ENCODE measurements at regions of chr12 and their contacts with region 1.

Region 1: DNA sequence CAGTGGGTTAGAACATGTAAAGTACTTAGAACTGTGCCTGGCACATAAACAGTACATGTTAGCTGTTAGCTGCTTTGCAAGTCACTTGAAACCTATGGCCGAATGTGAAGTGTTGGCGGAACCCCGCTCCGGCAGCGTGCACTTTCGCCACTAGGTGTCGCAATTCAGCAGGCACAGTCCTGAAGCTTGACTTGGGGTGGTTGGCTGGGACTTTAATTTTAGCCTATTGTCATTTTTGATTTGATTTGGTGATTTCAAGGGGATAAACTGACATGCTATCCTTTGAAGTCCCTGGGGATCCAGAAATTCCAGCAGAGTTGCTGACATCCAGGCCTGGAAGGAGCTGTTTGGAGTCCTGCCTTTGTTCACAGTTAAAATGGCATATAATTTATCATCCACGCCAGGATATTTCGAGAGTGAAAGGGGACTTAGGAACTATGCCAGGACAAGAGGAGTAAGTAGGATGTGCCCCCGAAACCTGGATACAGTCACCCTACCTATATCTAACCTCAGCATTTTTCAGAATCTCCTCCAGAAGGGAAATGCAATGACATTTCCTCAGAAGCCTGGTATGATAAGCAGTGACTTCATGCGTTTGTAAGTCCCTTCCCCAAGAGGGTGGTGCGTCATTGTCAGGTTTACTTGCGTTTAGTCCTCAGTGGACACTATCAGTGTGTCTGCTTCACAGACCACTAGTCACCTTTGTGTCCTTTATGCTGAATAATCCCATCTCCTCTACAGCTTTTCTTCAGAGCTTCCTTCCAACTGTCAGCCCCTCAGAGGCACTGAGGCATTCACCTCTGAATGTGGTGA is 3.5 kb upstream of the TSPAN9 start:
- DNase-seq: peak; percentile 89 to 92
- ATAC-seq: peak; percentile 49 to 72; a peak in 5 of 6 replicates
- H3K4me3 ChIP-seq: no peak overlapping the region
- H3K27ac ChIP-seq: no peak overlapping the region
- H3K4me1 ChIP-seq: peaks cover 11% of the 10 kb centered on the region; the same call in 2 of the 3 replicates
- CTCF ChIP-seq: peak; percentile 95
- EP300 ChIP-seq: no peak
- POLR2A ChIP-seq: no peak
- RAD21 ChIP-seq: peak; percentile 73 to 82

Region 2: GRCh38 chr12:2982127-2982760 is 91.4 kb before region 1 on chr12:
- CTCF ChIA-PET with region 1: no interaction called
- POLR2A ChIA-PET with region 1: no interaction called
- DNase-seq: no peak
- ATAC-seq: no peak
- H3K4me3 ChIP-seq: no peak overlapping the region
- H3K27ac ChIP-seq: no peak overlapping the region
- H3K4me1 ChIP-seq: no peaks in the 10 kb centered on the region
- CTCF ChIP-seq: no peak
- EP300 ChIP-seq: no peak
- POLR2A ChIP-seq: no peak
- RAD21 ChIP-seq: no peak

Region 3: DNA sequence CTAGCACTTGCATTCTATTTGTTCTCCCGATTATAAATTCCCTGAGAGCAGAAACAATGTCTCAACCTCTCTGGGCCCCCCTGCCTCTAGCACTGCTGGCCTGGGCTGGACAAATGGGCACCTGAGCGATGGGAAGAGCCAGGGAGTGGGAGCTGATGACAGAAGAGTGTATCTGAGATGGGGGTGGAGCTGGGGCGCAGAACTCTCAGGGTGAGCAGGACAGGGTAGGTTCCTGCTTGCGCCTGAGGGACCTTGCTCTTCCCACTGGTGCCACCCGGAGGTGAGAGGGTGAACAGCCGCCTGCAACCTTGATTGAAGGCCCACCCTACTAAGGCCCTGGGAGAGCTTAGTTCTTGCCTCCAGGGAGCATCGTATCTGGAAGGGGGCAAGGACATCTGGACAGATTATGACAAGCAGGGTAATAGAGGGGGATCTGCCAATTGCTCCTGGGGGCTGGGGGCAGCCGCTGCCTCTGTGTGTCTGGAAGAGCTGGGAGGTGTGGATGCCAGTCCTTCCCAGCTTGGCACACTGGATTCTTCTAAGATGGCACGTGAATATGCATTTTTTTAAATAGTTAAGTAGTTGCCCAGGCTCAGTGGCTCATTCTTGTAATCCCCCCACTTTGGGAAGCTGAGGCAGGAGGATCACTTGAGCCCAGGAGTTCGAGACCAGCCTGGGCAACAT is 39.4 kb before region 1 on chr12:
- CTCF ChIA-PET with region 1: interaction called, 10 read pairs
- POLR2A ChIA-PET with region 1: no interaction called
- DNase-seq: peak; percentile 79 to 82
- ATAC-seq: peak; percentile 92 to 95
- H3K4me3 ChIP-seq: no peak overlapping the region
- H3K27ac ChIP-seq: no peak overlapping the region
- H3K4me1 ChIP-seq: no peaks in the 10 kb centered on the region
- CTCF ChIP-seq: peak; percentile 50
- EP300 ChIP-seq: no peak
- POLR2A ChIP-seq: no peak
- RAD21 ChIP-seq: peak; percentile 54 to 69

Region 4: DNA sequence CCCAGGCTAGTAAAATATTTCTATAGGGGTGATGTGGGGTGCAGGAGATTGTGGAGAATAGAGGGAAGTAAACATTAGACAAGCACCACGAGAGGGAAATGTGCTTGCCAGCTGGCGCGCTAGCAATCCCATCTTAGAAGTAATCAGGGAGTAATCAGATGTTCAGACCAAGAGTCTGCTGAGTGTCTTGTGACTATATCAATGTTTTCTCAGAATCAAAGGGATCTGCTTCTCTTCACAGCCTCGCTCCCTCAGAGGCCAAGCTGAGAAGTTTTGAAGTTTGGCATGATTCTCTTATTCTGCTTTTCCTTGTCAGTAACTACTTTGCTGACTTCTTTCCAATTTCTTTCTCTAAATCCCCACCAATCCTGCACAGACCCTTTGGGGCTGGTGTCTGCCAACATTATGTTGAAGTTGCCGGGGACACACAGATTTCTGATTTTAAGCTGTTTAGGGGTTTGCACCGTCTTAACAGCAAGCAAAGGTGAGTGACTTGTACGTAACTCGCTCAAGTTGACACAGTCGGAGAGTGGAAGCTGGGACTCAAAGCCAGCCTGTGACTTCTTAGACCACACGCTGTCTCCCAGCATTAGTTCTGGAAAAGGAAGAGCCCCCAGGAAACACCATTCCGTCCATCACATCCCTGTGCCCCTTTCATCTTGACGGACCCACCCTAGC is 18.5 kb before region 1 on chr12:
- CTCF ChIA-PET with region 1: interaction called, 61 read pairs
- POLR2A ChIA-PET with region 1: no interaction called
- DNase-seq: no peak
- ATAC-seq: 0 out of 6 replicates have a peak, but pooled peaks of 1 of the 2 experiments have one; percentile 19
- H3K4me3 ChIP-seq: no peak overlapping the region
- H3K27ac ChIP-seq: no peak overlapping the region
- H3K4me1 ChIP-seq: no peaks in the 10 kb centered on the region
- CTCF ChIP-seq: no peak
- EP300 ChIP-seq: no peak
- POLR2A ChIP-seq: no peak
- RAD21 ChIP-seq: no peak

Region 5: GRCh38 chr12:3060778-3061458 is 12.7 kb before region 1 on chr12:
- CTCF ChIA-PET with region 1: interaction called, 61 read pairs
- POLR2A ChIA-PET with region 1: no interaction called
- DNase-seq: no peak
- ATAC-seq: peak; percentile 43 to 56; a peak in 4 of 6 replicates
- H3K4me3 ChIP-seq: no peak overlapping the region
- H3K27ac ChIP-seq: no peak overlapping the region
- H3K4me1 ChIP-seq: no peaks in the 10 kb centered on the region
- CTCF ChIP-seq: no peak
- EP300 ChIP-seq: no peak
- POLR2A ChIP-seq: no peak
- RAD21 ChIP-seq: no peak

Region 6: DNA sequence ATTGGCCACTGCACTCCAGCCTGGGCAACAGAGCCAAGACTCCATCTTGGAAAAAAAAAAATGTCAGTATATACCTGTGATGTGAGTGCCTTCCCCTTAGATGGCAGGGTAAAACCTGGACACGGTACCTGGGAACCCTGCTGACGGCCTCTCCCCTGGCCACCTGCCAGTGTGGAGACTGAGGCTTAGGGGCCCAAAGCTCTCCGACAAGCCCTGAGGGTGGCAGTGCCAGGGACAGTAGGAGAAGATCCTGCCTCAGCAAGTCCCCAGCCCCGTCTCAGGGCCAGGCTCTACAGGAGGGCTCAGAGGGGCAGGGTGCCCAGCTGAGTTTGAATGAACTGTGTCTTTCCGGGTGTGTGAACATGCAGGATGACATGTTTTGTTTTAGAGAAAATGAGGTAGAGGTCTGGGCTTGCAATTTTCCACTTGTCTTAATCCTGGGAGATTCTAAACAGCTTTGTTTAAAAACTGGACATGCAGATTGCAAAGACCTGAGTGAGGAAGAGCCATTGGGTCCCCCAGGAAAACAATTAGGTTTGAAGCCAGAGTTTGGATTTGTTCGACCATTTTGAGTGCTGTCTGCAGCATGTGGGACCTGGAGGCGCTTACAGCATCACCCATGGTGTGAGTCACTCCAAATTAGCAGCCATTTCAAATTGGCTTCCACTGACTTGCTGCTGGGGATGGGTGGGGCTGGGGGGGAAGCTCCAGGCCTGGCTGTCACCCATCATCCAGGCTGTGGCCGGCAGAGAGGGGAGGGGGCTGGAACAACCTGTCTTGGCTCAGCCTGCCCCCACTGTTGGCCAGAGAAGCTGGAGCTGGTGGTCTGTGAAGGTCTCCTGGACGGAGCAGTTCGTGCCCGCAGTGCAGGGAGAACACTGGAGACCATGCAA is 14.4 kb after region 1 on chr12:
- CTCF ChIA-PET with region 1: interaction called, 15 read pairs
- POLR2A ChIA-PET with region 1: no interaction called
- DNase-seq: no peak
- ATAC-seq: no peak
- H3K4me3 ChIP-seq: no peak overlapping the region
- H3K27ac ChIP-seq: no peak overlapping the region
- H3K4me1 ChIP-seq: no peaks in the 10 kb centered on the region
- CTCF ChIP-seq: no peak
- EP300 ChIP-seq: no peak
- POLR2A ChIP-seq: no peak
- RAD21 ChIP-seq: no peak

Region 7: GRCh38 chr12:3281588-3282383 is 208.1 kb after region 1 on chr12:
- CTCF ChIA-PET with region 1: interaction called, 127 read pairs
- POLR2A ChIA-PET with region 1: no interaction called
- DNase-seq: no peak
- ATAC-seq: no peak
- H3K4me3 ChIP-seq: no peak overlapping the region
- H3K27ac ChIP-seq: no peak overlapping the region
- H3K4me1 ChIP-seq: no peaks in the 10 kb centered on the region
- CTCF ChIP-seq: no peak
- EP300 ChIP-seq: no peak
- POLR2A ChIP-seq: no peak
- RAD21 ChIP-seq: no peak

Region 8: DNA sequence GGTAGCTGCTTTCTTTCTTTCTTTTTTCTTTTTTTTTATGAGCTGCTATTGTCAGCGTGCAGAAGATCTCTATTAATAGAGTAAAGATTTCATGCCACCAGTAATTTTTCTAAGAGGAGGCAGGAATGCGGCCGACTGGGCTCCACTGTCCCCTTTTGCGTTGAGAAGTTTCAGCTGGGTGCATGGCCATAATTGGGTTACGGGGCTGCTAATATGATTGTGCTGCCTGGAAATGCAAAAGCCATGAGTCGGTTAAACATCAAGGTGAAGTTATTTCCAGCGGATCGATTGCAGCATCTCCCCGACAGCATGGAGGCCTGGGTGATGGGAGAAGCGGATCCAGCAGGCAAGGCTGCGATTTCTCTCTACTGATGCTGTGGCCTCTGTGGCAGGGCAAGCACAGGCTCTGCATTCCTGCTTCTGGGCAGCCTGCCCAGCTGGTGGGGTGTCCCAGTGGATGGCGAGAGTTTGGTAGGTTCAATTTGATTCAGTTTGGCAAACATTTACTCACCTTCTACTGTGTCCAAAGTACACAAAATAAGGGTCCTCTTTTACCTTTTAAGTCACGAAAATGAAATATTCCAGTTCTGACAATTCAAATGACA is 362.9 kb after region 1 on chr12:
- CTCF ChIA-PET with region 1: no interaction called
- POLR2A ChIA-PET with region 1: no interaction called
- DNase-seq: no peak
- ATAC-seq: no peak
- H3K4me3 ChIP-seq: no peak overlapping the region
- H3K27ac ChIP-seq: no peak overlapping the region
- H3K4me1 ChIP-seq: no peaks in the 10 kb centered on the region
- CTCF ChIP-seq: no peak
- EP300 ChIP-seq: no peak
- POLR2A ChIP-seq: no peak
- RAD21 ChIP-seq: no peak